ENCODE measurements at regions of chr1 and their contacts with region 1.

Region 1: DNA sequence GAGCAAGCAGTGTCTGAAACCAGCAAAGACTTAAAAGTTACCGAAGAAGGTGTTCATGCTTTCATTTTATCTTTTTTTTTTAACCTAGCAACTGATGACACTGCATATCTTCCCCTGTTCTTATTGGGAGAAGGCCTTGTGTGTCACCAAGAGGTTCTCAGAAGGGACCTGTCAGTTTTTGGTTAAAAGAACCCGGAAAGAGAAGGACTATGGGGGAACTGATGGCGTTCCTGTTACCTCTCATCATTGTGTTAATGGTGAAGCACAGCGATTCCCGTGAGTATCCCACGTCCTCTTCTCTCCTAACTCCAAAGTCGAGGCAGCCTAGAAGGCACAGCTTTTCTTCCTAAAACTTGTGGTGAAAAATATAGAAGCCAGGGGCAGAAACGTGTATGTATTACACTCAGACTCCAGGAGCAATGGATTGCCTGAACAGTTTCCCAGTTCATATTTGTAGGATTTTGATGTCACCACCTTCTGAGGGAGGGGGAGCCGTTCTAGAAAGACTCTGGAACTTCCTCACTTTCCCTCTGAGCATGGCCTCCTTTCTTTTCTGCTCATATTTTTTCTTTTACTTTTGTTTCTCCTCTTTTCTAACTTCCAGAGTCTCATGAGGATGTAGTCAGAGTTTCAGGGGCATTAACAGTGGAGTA is at the start of gene MR1:
- DNase-seq: peak; percentile 57
- H3K4me3 Mint-ChIP-seq: peak within 1 kb of the TSS; percentile 95
- H3K27ac Mint-ChIP-seq: peak within 1 kb of the TSS; percentile 95
- H3K4me1 Mint-ChIP-seq: peaks cover 54% of the 10 kb centered on the region
- H3K27me3 Mint-ChIP-seq: no peaks in the 10 kb centered on the region

Region 2: GRCh38 chr1:180881806-180882509 is 152.0 kb before region 1 on chr1:
- CTCF ChIA-PET with region 1: interaction called, 13 read pairs
- DNase-seq: no peak
- H3K4me3 Mint-ChIP-seq: no peak overlapping the region
- H3K27ac Mint-ChIP-seq: no peak overlapping the region
- H3K4me1 Mint-ChIP-seq: no peaks in the 10 kb centered on the region
- H3K27me3 Mint-ChIP-seq: no peaks in the 10 kb centered on the region

Region 3: DNA sequence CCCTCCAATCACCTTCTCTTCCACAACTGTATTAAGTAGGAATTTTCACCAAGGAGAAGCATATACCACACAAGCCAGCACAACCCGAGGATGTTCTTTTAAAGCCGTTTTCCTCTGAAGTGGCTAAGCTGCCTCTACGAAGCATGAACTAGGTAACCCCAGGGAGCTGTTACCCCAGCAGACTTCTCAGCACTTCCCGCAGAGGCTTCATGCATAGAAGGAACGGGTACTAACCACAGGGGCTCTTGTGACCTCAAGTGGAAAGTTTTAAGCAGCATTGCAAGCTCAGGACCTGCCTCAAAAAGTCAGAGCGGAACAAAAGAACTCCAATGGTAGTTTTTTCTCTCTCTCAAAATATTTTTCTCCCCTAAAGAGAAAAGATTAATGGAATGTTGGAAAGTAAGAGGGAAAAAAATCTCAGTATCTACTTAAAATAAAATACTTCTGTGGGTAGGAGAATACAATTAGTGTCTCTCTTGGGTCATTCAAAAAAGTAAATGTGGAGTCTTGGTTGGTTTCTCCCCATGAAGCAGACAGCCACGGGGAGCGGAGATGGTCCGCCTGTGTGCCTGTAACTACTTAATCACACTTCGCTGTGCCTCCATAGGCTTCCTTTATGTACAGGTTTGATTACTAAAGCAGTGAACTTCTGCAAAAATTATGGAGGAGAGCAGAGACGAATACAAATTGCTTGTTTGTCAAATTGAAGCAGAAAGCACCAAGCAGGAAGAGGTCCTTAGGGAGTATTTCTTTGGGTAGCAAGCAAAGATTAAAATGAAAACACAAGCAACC is 52.1 kb before region 1 on chr1:
- CTCF ChIA-PET with region 1: no interaction called
- DNase-seq: peak; percentile 51
- H3K4me3 Mint-ChIP-seq: no peak overlapping the region
- H3K27ac Mint-ChIP-seq: no peak overlapping the region
- H3K4me1 Mint-ChIP-seq: peaks cover 18% of the 10 kb centered on the region
- H3K27me3 Mint-ChIP-seq: no peaks in the 10 kb centered on the region

Region 4: DNA sequence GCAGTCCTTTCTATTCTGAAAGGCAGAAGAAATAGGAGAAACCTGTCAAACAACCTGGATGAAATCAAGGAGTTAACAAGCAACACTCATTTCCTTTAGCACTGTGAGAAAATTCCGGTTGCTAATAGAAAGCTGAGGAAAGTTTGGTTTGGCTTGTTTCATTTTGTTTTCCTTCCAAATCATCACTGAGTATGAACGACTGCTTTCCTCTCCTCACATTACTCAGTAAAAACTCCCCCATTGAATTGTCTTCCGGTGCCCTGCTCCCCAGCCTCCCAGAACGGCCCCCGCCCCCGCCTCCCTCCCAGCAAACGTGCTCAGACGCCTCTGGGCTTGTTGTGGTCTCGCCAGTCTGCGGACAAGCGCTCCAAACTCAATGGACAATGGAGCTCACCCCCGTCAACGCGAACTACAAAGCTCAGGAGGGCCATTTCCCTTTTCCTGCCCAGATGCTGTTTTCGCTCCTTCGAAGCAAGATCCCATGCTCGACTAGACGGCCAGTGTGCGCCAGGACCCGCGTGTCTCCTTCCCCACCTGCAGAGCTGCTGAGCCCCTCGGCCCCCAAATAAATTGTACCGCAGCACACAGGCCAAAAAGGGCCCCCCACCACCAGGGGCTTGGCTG is 12.0 kb before region 1 on chr1:
- CTCF ChIA-PET with region 1: interaction called, 11 read pairs
- DNase-seq: peak; percentile 73
- H3K4me3 Mint-ChIP-seq: peak overlapping the region; percentile 92
- H3K27ac Mint-ChIP-seq: peak overlapping the region; percentile 95
- H3K4me1 Mint-ChIP-seq: peaks cover 44% of the 10 kb centered on the region
- H3K27me3 Mint-ChIP-seq: peaks cover 33% of the 10 kb centered on the region

Region 5: GRCh38 chr1:181088079-181089016 is 54.4 kb after region 1 on chr1 and contains the start of gene IER5:
- CTCF ChIA-PET with region 1: interaction called, 15 read pairs
- DNase-seq: peak; percentile 97
- H3K4me3 Mint-ChIP-seq: peak within 1 kb of the TSS; percentile 100
- H3K27ac Mint-ChIP-seq: peak within 1 kb of the TSS; percentile 99
- H3K4me1 Mint-ChIP-seq: peaks cover 52% of the 10 kb centered on the region
- H3K27me3 Mint-ChIP-seq: peaks cover 18% of the 10 kb centered on the region

Region 6: GRCh38 chr1:181166377-181167196 is 132.7 kb after region 1 on chr1:
- CTCF ChIA-PET with region 1: interaction called, 17 read pairs
- DNase-seq: peak; percentile 84
- H3K4me3 Mint-ChIP-seq: no peak overlapping the region
- H3K27ac Mint-ChIP-seq: peak overlapping the region; percentile 21
- H3K4me1 Mint-ChIP-seq: peaks cover 7% of the 10 kb centered on the region
- H3K27me3 Mint-ChIP-seq: peaks cover 51% of the 10 kb centered on the region

Measured in activated naive CD4-positive, alpha-beta T cell treated with anti-CD3 and anti-CD28 coated beads, Interleukin-2, amount 10 ng/mL, durations not matched to agents 7 days and 5 days (primary cell).